OCI-LY7 (cell line): ENCODE measurements at regions of chr1 and their contacts with region 1.

Region 1: DNA sequence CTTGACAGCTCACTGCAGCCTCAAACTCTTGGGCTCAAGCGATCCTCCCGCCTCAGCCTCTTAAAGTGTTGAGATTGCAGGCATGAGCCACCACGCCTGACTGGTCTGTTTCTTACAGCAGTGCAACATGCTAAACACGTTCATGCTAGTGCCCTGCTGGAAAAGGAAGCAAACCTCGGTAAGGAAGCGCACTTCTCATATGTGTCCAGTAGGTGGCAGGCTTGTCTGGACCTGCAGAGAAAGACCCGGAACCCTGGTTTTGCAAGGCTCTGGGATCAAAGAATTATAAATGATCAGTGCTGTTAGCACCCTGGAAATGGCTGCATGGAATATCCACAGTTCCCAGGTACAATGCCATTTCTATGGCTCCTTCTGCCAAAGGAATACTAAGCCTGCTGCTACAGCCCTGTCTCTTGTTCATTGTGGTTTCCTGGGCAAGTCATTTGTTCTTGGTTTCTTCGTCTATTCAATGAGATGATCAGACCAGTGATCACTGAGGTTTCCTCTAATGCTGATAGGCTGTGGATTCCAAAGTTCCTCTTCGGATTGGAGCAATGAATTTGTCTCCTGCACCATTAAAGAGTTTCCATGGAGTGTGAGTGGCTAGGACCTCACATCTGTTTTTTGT is 15.9 kb downstream of the RNU5D-1 start:
- DNase-seq: peak; percentile 92
- H3K4me3 ChIP-seq: peak overlapping the region; percentile 21
- H3K27ac ChIP-seq: peak overlapping the region; percentile 96
- H3K4me1 ChIP-seq: peaks cover 80% of the 10 kb centered on the region
- CTCF ChIP-seq: peak; percentile 97

Region 2: GRCh38 chr1:44645476-44646244 is 69.4 kb before region 1 on chr1:
- CTCF ChIA-PET with region 1: no interaction called
- POLR2A ChIA-PET with region 1: no interaction called
- intact Hi-C with region 1: no loop called
- DNase-seq: no peak
- H3K4me3 ChIP-seq: no peak overlapping the region
- H3K27ac ChIP-seq: no peak overlapping the region
- H3K4me1 ChIP-seq: no peaks in the 10 kb centered on the region
- CTCF ChIP-seq: no peak

Region 3: GRCh38 chr1:44674113-44675000 is 40.7 kb before region 1 on chr1 and contains the starts of genes ARMH1 and TMEM53:
- CTCF ChIA-PET with region 1: no interaction called
- POLR2A ChIA-PET with region 1: interaction called, 9 read pairs
- intact Hi-C with region 1: loop called (anchors 2 kb)
- DNase-seq: peak; percentile 99
- H3K4me3 ChIP-seq: peak within 1 kb of the TSS; percentile 73
- H3K27ac ChIP-seq: peak within 1 kb of the TSS; percentile 53
- H3K4me1 ChIP-seq: peaks cover 54% of the 10 kb centered on the region
- CTCF ChIP-seq: peak; percentile 57
- total RNA-seq, gene ARMH1: 5.3 and 7.8 TPM in 2 replicates
- total RNA-seq, gene TMEM53: 5.5 and 6.6 TPM in 2 replicates

Region 4: DNA sequence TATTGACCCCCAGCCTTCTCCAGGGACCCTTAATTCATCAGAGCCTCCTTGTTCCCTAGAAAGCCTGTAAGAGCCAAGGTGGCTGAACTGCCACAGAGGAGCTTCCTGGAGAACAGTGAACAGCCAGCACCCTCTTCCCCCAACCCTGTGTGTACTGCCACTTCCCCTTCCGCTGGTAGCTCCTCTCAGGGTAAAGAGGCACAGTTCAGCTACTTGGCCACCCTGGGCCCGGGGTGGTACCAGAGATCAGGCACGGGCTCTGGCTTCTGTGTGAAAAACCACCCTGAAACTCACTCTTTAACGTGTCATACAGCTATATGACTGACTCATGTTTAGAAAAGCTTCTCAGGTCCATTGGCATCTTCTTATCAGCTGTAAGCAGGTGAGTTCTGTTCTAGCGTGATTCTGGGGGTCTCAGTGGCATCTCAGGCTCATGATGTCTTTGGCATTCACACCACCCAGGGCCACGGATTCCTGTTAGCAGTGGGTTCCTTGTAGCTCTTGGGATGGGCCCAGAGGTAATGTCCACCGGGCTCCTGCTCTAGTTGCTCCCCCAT is 18.2 kb before region 1 on chr1:
- CTCF ChIA-PET with region 1: interaction called, 11 read pairs
- POLR2A ChIA-PET with region 1: interaction called, 69 read pairs
- intact Hi-C with region 1: loop called (anchors 2 kb)
- DNase-seq: peak; percentile 73
- H3K4me3 ChIP-seq: peak overlapping the region; percentile 25
- H3K27ac ChIP-seq: peak overlapping the region; percentile 80
- H3K4me1 ChIP-seq: peaks cover 57% of the 10 kb centered on the region
- CTCF ChIP-seq: no peak

Region 5: DNA sequence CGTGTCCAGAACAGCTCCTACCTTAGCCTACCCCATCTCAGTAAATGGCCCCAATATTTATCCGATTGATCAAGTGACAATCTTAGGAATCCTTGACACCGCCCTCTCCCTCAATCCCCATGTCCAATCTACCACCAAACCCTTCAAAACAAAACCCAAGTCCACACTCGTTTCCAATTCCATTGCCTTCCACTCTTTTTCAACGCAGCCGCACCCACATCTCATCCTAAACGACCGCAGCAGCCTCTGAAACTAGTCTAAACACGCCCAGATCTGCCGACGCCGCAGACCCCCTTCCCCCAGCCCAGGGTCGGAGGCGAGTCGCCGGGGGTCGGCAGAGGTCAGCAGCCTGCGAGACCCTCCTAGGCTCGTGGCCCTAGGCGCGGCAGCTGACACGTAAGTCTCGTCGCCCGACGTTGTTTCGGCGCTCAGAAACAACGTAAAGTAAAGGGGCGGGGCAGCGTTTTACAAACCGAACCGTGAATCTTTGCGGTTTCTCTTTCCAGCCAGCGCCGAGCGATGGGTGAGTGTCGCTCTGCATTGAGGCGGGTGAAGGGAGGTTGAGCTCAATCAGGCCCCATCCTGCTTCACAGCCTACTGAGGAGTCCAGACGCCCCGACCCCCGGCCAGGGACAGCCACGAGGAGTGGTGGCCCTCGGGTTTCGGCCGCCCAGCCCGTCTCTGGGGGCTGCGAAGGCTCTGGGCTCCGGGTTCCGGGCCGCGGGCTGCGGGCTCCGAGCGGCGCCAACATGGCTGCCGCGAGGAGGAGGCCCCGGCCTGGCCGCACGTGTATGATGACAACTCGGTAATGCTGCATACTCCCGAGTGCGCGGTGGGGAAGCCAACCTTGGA is 60.2 kb after region 1 on chr1 and contains the start of gene RPS8:
- CTCF ChIA-PET with region 1: no interaction called
- POLR2A ChIA-PET with region 1: interaction called, 18 read pairs
- intact Hi-C with region 1: no loop called
- DNase-seq: peak; percentile 95
- H3K4me3 ChIP-seq: peak within 1 kb of the TSS; percentile 99
- H3K27ac ChIP-seq: peak within 1 kb of the TSS; percentile 68
- H3K4me1 ChIP-seq: peaks cover 32% of the 10 kb centered on the region
- CTCF ChIP-seq: no peak
- total RNA-seq, gene RPS8: 4,149 and 4,355 TPM in 2 replicates

Region 6: DNA sequence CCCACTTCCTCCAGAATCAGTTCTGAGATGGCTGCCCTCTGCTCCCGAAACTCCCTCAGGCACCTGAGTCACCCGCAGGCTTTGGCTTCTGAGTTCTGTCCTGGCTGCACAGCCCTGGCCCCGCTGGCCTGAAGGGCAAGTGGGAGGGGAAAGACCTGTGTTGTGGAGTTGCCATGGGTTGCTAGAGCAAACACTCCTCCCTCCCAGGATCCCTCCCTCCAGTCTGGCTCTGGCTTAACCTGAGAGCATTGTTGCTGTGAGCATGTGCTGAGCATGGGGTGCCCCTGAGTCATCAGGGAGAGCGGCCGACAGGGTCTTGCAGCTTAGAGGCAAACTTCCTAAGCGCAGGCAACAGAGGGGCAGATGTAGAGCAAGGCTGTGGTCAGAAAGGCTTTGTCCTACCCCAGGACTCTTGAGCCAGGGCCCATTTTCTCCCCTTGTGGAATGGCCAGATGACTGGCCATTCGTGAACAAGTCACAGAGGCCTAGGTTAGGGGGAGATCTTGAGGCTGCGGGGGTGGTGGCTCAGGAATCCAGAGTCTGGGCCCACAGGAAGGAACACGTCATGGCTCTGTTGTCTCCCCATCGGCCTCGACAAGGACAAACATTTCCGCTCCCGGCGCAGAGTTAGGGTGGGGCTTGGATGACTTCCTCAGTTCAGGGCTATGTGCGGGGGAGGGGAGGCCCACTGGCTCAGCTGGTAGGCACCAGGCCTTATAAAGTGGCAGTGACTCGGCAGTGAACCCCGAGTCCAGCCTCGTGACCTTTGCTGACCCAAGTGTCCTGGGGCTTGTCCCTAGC is 92.4 kb after region 1 on chr1 and contains the start of gene DYNLT4:
- CTCF ChIA-PET with region 1: no interaction called
- POLR2A ChIA-PET with region 1: interaction called, 11 read pairs
- intact Hi-C with region 1: no loop called
- DNase-seq: peak; percentile 68
- H3K4me3 ChIP-seq: no peak within 1 kb of the TSS
- H3K27ac ChIP-seq: peak within 1 kb of the TSS; percentile 74
- H3K4me1 ChIP-seq: peaks cover 44% of the 10 kb centered on the region
- CTCF ChIP-seq: no peak
- total RNA-seq, gene DYNLT4: 1.5 TPM in 1 of 2 replicates, not detected in the other